ENCODE measurements at regions of chr17 and their contacts with region 1.

Region 1: GRCh38 chr17:32503251-32504165 is 16.7 kb downstream of the CDK5R1 start:
- DNase-seq: peak in 7 of 9 experiments; percentile 36 to 85 (median 61)
- ATAC-seq: peak; percentile 91
- H3K4me3 ChIP-seq: peak overlapping the region in 1 of 2 experiments; percentile 39
- H3K4me3 Mint-ChIP-seq: peak overlapping the region; percentile 68
- H3K27ac ChIP-seq: peak overlapping the region; percentile 60 to 90
- H3K27ac Mint-ChIP-seq: peak overlapping the region; percentile 98
- H3K4me1 ChIP-seq: peaks cover 76% of the 10 kb centered on the region
- H3K4me1 Mint-ChIP-seq: peaks cover 79% of the 10 kb centered on the region
- H3K27me3 ChIP-seq: no peaks in the 10 kb centered on the region
- H3K27me3 Mint-ChIP-seq: no peaks in the 10 kb centered on the region
- CTCF ChIP-seq: no peak

Region 2: GRCh38 chr17:32519228-32520103 is 16.0 kb after region 1 on chr17:
- CTCF ChIA-PET with region 1: interaction called, 9 read pairs
- POLR2A ChIA-PET with region 1: interaction called, 6 read pairs
- intact Hi-C with region 1: loop called (anchors 1 to 2 kb)
- DNase-seq: peak; percentile 57 to 89 (median 76)
- ATAC-seq: peak; percentile 43
- H3K4me3 ChIP-seq: peak overlapping the region; percentile 31 to 51
- H3K4me3 Mint-ChIP-seq: peak overlapping the region; percentile 83
- H3K27ac ChIP-seq: peak overlapping the region; percentile 60 to 95
- H3K27ac Mint-ChIP-seq: peak overlapping the region; percentile 93
- H3K4me1 ChIP-seq: peaks cover 79% of the 10 kb centered on the region
- H3K4me1 Mint-ChIP-seq: peaks cover 81% of the 10 kb centered on the region
- H3K27me3 ChIP-seq: no peaks in the 10 kb centered on the region
- H3K27me3 Mint-ChIP-seq: no peaks in the 10 kb centered on the region
- CTCF ChIP-seq: no peak

Region 3: DNA sequence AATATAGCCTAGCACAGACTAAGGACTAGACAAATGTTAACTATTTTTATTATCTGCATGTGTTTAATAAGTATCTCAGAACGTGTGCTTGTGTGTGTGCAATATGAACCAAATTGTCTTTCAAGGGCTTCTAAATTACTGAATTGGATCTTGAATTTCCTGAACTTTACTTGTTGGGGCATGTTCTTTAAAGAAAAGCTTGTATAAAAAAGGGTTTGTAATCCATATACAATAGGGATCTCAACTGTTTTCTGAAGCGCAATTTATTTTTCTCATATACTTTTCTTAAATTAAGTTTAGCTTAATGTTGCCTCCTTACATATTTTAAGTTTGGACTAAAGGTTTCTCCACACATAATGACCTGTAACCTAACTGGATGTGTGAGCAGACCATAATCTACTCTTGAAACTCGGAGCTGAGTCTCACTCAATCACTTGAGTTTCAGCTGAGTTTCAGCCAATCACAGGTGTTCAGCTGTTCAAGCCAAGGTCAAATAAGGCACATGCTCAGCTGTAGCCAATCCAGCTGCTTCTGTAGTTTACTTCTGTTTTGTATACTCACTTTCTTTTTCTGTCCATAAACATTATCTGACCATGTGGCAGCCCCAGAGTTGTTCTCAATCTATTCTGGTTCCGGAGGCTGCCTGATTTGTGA is 55.6 kb after region 1 on chr17:
- CTCF ChIA-PET with region 1: no interaction called
- POLR2A ChIA-PET with region 1: interaction called, 3 read pairs
- intact Hi-C with region 1: loop called in 1 of 2 experiments (anchors 5 kb)
- DNase-seq: no peak
- ATAC-seq: no peak
- H3K4me3 ChIP-seq: no peak overlapping the region
- H3K4me3 Mint-ChIP-seq: no peak overlapping the region
- H3K27ac ChIP-seq: peak overlapping the region in 1 of 2 experiments; percentile 25
- H3K27ac Mint-ChIP-seq: no peak overlapping the region
- H3K4me1 ChIP-seq: peaks cover 19% of the 10 kb centered on the region
- H3K4me1 Mint-ChIP-seq: peaks cover 28% of the 10 kb centered on the region
- H3K27me3 ChIP-seq: no peaks in the 10 kb centered on the region
- H3K27me3 Mint-ChIP-seq: no peaks in the 10 kb centered on the region
- CTCF ChIP-seq: no peak

Region 4: DNA sequence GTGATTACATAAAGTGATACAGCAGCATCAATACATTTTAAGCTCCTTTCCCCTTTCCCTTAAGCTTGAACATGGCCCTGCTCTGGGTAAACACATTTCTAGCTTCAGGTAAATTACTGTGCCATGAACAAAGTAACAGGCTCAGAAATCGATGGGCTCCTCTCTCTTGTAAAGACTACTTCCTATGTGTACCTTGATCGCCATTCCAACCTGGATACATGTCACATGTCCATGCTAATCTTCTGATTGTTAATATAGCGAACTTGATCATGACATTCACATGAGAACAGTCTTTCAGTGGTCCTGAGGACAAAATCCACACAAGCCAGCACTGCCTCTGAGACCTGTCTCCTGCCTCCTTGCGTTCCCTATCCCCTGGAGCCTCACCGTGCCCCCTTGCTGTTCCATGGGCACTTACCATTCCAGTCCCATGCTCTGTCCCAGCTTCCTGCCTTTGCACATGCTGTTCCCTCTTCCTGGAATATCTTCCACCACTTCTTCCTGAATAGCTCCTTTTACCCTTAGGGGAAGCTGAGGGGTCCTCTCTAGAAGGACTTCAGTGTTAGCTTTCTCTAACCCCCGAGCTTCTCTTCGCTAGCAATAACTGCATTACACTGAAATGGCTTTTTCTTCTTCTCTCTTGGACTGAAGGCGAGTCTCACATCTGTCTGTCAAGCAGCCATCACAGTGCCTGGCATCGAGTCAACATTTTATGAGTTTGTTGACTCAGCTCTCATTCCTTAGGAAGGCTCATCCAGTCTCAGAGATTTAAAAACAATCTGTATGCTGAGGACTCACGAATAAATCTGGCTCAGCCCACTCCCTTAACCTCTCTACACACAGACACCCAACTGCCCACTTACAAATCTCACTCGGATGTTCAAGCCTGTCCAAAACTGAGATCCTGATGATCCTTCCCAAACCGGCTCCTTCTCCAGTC is 696.3 kb after region 1 on chr17:
- CTCF ChIA-PET with region 1: no interaction called
- POLR2A ChIA-PET with region 1: no interaction called
- intact Hi-C with region 1: no loop called
- DNase-seq: no peak
- ATAC-seq: no peak
- H3K4me3 ChIP-seq: no peak overlapping the region
- H3K4me3 Mint-ChIP-seq: no peak overlapping the region
- H3K27ac ChIP-seq: no peak overlapping the region
- H3K27ac Mint-ChIP-seq: no peak overlapping the region
- H3K4me1 ChIP-seq: no peaks in the 10 kb centered on the region
- H3K4me1 Mint-ChIP-seq: no peaks in the 10 kb centered on the region
- H3K27me3 ChIP-seq: no peaks in the 10 kb centered on the region
- H3K27me3 Mint-ChIP-seq: peaks cover 7% of the 10 kb centered on the region
- CTCF ChIP-seq: no peak